AG04450 (cell line): ENCODE measurements at regions of chr17 and their contacts with region 1.

Region 1: GRCh38 chr17:63946440-63947367 is 14.6 kb upstream of the CD79B start:
- DNase-seq: no peak
- H3K4me3 ChIP-seq: no peak overlapping the region
- H3K27ac ChIP-seq: no peak overlapping the region
- H3K27me3 ChIP-seq: peaks cover 20% of the 10 kb centered on the region
- CTCF ChIP-seq: peak; percentile 73

Region 2: GRCh38 chr17:63931099-63931561 is 15.6 kb before region 1 on chr17:
- CTCF ChIA-PET with region 1: interaction called, 32 read pairs
- POLR2A ChIA-PET with region 1: no interaction called
- DNase-seq: no peak
- H3K4me3 ChIP-seq: no peak overlapping the region
- H3K27ac ChIP-seq: no peak overlapping the region
- H3K27me3 ChIP-seq: peaks cover 24% of the 10 kb centered on the region
- CTCF ChIP-seq: no peak

Region 3: GRCh38 chr17:63961355-63962212 is 14.9 kb after region 1 on chr17:
- CTCF ChIA-PET with region 1: interaction called, 41 read pairs
- POLR2A ChIA-PET with region 1: no interaction called
- DNase-seq: no peak
- H3K4me3 ChIP-seq: no peak overlapping the region
- H3K27ac ChIP-seq: no peak overlapping the region
- H3K27me3 ChIP-seq: peaks cover 5% of the 10 kb centered on the region
- CTCF ChIP-seq: no peak